ENCODE measurements at regions of chr1 and their contacts with region 1.

Region 1: DNA sequence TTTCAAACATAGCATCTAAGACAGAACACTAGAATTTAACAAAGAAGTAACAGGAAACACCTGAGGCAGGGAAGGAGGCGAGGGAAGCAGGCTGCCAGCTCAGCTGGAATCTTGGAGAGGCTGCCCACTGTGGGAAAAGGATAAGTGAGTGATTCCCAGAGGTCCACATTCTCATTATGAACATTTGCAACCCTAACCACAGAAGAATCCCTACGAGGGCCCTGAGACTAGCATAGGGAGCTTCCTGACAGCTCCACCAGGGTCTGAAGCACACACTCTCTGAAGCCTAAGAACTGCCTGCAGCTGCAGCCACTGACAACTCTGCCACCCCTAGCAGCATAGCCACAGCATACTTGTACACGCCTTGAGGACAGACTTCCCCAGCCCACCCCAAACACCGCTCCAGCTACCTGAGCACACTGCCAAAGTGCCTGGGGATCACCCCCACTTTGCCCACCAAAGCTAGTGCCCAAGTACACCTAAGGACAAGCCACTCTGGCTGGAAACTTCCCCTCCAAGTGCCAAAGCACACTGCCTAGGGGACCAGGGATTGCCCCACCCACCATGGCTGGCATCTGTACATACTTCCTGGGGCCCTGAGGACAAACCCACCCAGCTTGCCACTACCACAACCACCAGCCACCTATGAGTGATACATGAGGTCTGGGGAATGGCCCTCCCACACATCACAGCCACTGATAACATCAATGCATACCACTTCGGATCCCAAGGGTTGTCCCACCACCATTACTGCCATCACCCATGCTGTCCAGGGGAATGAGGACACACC is 76.6 kb upstream of the GUCA2A start:
- DNase-seq: no peak
- H3K4me3 ChIP-seq: no peak overlapping the region
- H3K27ac ChIP-seq: no peak overlapping the region
- H3K4me1 ChIP-seq: peaks cover 5% of the 10 kb centered on the region
- H3K27me3 ChIP-seq: no peaks in the 10 kb centered on the region
- CTCF ChIP-seq: no peak
- EP300 ChIP-seq: no peak
- POLR2A ChIP-seq: no peak

Region 2: GRCh38 chr1:42221952-42222606 is 19.1 kb before region 1 on chr1:
- intact Hi-C with region 1: loop called in 1 of 4 experiments (anchors 1 kb)
- DNase-seq: no peak
- H3K4me3 ChIP-seq: no peak overlapping the region
- H3K27ac ChIP-seq: no peak overlapping the region
- H3K4me1 ChIP-seq: peaks cover 3% of the 10 kb centered on the region
- H3K27me3 ChIP-seq: no peaks in the 10 kb centered on the region
- CTCF ChIP-seq: no peak
- EP300 ChIP-seq: no peak
- POLR2A ChIP-seq: no peak

Region 3: GRCh38 chr1:42305639-42306038 is 64.5 kb after region 1 on chr1:
- intact Hi-C with region 1: no loop called
- DNase-seq: no peak
- H3K4me3 ChIP-seq: no peak overlapping the region
- H3K27ac ChIP-seq: no peak overlapping the region
- H3K4me1 ChIP-seq: no peaks in the 10 kb centered on the region
- H3K27me3 ChIP-seq: no peaks in the 10 kb centered on the region
- CTCF ChIP-seq: no peak
- EP300 ChIP-seq: no peak
- POLR2A ChIP-seq: no peak

Region 4: DNA sequence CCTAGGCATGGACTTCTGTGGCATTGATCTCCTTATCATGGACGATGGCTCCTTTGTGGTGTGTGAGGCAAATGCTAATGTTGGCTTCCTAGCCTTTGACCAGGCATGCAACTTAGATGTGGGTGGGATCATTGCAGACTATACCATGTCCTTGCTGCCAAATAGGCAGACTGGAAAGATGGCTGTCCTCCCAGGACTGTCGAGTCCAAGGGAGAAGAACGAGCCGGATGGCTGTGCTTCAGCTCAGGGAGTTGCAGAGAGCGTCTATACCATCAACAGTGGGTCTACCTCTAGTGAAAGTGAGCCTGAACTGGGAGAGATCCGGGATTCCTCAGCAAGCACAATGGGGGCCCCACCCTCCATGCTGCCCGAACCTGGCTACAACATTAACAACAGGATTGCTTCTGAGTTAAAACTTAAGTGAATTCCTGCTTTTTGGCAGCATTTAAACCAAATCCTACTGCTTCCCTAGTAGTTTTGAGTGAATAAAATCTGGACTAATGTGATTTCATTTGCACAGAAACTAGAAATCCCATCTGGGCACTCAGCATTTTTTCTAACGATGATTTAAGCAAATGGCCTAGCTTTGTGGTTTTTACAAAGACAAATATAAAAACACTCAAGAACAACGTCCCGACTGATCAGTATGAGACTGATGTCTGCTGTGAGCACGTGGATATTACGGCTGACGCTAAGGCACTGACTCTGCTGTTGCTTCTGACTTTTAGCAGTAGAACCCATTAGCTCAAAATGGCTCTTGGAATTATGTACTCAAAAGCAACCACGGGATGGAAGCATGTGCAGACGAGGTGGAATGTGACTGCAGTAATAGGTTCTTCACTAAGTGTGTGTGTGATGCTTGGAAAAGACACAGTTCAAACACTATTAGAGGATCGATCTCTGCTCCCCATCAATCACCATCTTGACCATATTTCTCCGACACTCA is 173.7 kb after region 1 on chr1:
- intact Hi-C with region 1: no loop called
- DNase-seq: no peak
- H3K4me3 ChIP-seq: no peak overlapping the region
- H3K27ac ChIP-seq: no peak overlapping the region
- H3K4me1 ChIP-seq: no peaks in the 10 kb centered on the region
- H3K27me3 ChIP-seq: no peaks in the 10 kb centered on the region
- CTCF ChIP-seq: no peak
- EP300 ChIP-seq: no peak
- POLR2A ChIP-seq: no peak